HCT116 (cell line): ENCODE measurements at regions of chr18 and their contacts with region 1.

Region 1: DNA sequence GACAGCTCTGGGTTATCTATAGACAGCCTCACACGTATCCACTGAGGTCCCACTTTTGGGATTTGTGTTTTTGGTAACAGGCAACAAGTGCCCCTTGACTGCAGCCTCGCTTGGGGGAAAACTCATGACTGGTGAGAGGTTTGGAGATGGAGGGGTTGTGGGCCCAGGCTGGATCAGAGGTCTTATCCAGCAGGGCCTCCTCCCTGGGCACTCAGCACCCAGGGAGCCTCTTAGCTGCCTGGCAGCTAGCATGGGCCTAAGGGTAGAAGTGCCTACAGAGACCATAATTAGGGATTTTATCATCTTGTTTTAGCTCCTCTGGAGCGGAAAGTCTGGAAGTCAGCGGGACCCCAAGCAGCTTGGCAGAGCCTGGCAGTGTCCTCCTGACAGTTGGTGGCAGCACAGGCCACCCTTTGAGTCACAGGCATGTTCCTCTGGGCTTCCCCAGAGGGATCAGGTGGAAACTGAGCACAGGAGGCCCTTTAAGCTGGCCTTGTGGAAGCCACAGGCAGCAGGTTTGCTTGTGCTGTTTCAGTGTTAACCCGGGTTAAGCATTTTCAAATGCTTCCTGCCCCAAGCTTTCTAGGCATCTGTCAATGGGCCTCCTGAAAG is 143.1 kb downstream of the KCTD1 start:
- DNase-seq: peak; percentile 36
- ATAC-seq: peak; percentile 96
- H3K4me3 ChIP-seq: no peak overlapping the region
- H3K27ac ChIP-seq: no peak overlapping the region
- H3K4me1 ChIP-seq: no peaks in the 10 kb centered on the region; a peak in 1 of 4 replicates
- H3K27me3 ChIP-seq: no peaks in the 10 kb centered on the region
- CTCF ChIP-seq: peak; percentile 56 to 75 (median 64); a peak in 5 of 6 replicates
- POLR2A ChIP-seq: no peak
- RAD21 ChIP-seq: peak; percentile 90

Region 2: GRCh38 chr18:26277374-26277773 is 127.9 kb before region 1 on chr18:
- CTCF ChIA-PET with region 1: no interaction called
- POLR2A ChIA-PET with region 1: no interaction called
- RAD21 ChIA-PET with region 1: no interaction called
- intact Hi-C with region 1: no loop called
- DNase-seq: no peak
- ATAC-seq: no peak
- H3K4me3 ChIP-seq: no peak overlapping the region
- H3K27ac ChIP-seq: no peak overlapping the region
- H3K4me1 ChIP-seq: no peaks in the 10 kb centered on the region
- H3K27me3 ChIP-seq: no peaks in the 10 kb centered on the region
- CTCF ChIP-seq: no peak
- POLR2A ChIP-seq: no peak
- RAD21 ChIP-seq: no peak

Region 3: DNA sequence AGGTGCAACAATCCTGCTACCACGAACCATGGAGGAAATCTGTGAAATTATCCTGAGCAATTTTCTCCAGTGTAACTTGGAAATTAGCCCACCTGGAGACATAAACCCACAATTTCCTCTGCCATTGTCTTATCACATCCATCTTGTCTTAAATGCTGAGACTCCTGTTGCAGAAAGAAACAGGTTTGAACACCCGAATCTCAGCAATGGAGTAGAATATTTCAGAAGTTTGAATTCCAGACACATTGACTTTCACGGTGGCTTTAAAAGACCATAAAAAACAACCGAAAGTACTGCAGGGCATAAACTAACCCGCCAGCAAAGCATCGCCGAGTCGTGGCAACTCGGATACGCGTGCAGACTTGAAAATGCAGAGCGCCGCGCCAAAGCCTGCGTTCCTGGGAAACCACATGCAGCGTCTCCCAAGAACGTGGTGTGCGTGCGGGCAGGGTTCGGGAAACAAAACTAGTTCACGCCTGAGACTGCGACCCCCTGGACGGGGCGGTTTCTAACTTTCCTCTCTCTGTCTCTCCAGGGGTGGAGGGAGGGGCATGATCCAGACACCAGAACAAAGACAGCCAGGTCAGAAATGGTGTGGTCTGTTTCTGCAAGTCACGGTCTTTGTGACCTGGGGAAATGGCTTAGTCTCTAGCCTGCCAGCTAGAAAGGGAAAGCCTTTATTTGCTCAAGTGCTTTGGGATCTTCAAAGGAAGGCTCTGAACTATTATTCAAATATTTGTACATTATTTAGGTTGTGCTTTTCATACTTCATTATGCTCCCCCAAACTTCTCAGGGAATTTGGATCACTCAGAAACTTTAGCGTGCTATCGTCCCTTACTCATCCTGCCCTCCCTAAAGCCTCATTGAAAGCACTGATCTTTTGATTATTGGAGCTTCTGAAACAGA is 169.9 kb after region 1 on chr18:
- CTCF ChIA-PET with region 1: no interaction called
- POLR2A ChIA-PET with region 1: no interaction called
- RAD21 ChIA-PET with region 1: no interaction called
- intact Hi-C with region 1: no loop called
- DNase-seq: no peak
- ATAC-seq: peak; percentile 67
- H3K4me3 ChIP-seq: peak overlapping the region; percentile 40 to 57
- H3K27ac ChIP-seq: peak overlapping the region; percentile 14
- H3K4me1 ChIP-seq: peaks cover 13 to 36% of the 10 kb centered on the region in 2 experiments; a peak in 3 of 4 replicates
- H3K27me3 ChIP-seq: no peaks in the 10 kb centered on the region
- CTCF ChIP-seq: no peak
- POLR2A ChIP-seq: no peak
- RAD21 ChIP-seq: no peak

Region 4: DNA sequence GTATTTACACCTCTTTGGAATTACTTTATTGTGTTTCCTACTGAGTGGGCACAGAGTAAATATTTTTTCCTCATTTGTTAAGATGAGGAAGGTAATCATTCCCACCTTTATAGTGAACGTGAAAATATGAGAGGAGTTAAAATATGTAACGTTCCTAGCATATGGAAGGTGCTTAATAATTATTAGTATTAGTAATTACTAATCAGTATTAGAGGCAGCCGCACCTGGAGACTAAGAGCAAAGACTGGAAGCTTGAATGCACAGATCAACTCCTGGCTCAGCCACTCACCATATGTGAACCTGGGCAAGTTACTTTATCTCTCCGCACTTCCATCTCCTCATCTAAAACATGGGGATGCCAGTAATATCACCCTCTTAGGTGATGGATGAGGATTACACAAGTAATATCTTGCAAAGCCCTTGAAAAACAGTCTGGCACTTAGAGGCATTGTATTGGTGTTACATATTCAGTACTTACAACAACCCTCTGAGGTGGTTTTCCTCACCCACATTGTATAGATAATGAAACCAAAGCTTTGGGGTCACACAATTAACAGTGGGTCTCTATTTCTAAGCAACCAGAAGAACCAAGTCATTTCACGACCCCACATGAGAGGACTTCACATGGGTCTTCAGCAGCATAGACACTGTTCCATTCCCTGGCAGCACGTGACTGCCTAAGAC is 243.4 kb after region 1 on chr18:
- CTCF ChIA-PET with region 1: interaction called, 5 read pairs
- POLR2A ChIA-PET with region 1: no interaction called
- RAD21 ChIA-PET with region 1: interaction called in 1 of 2 experiments, 3 read pairs
- intact Hi-C with region 1: loop called (anchors 1 kb)
- DNase-seq: no peak
- ATAC-seq: no peak
- H3K4me3 ChIP-seq: no peak overlapping the region
- H3K27ac ChIP-seq: no peak overlapping the region
- H3K4me1 ChIP-seq: peaks cover 0 to 3% of the 10 kb centered on the region in 2 experiments; a peak in 1 of 4 replicates
- H3K27me3 ChIP-seq: peaks cover 10% of the 10 kb centered on the region
- CTCF ChIP-seq: no peak
- POLR2A ChIP-seq: no peak
- RAD21 ChIP-seq: no peak

Region 5: DNA sequence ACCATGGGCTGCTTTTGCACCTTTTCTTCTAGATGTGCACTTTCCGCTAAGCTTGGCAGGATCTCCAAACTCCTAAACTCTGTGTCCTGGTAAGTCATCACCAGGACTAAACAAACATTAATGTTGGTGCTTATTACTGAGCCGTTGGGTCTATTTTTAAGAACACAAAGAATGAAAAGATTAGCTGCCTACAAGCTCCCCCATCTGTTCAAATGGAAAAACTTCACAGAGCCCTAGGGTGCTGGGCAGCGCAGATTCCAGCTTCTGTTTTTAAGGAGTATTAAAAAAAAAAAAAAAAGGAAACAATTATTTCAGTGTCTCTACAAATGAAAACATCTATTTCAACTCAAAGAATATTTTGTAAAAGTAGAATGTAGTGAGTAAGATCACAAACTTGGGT is 558.0 kb after region 1 on chr18:
- CTCF ChIA-PET with region 1: no interaction called
- POLR2A ChIA-PET with region 1: no interaction called
- RAD21 ChIA-PET with region 1: no interaction called
- intact Hi-C with region 1: loop called (anchors 5 kb)
- DNase-seq: no peak
- ATAC-seq: no peak
- H3K4me3 ChIP-seq: no peak overlapping the region
- H3K27ac ChIP-seq: no peak overlapping the region
- H3K4me1 ChIP-seq: no peaks in the 10 kb centered on the region
- H3K27me3 ChIP-seq: no peaks in the 10 kb centered on the region
- CTCF ChIP-seq: 0 out of 6 replicates have a peak, but pooled peaks of 1 of the 3 experiments have one; percentile 23
- POLR2A ChIP-seq: no peak
- RAD21 ChIP-seq: peak; percentile 40